Heart right ventricle (tissue), 16 donors: ENCODE measurements at regions of chr7 and their contacts with region 1.

Region 1: DNA sequence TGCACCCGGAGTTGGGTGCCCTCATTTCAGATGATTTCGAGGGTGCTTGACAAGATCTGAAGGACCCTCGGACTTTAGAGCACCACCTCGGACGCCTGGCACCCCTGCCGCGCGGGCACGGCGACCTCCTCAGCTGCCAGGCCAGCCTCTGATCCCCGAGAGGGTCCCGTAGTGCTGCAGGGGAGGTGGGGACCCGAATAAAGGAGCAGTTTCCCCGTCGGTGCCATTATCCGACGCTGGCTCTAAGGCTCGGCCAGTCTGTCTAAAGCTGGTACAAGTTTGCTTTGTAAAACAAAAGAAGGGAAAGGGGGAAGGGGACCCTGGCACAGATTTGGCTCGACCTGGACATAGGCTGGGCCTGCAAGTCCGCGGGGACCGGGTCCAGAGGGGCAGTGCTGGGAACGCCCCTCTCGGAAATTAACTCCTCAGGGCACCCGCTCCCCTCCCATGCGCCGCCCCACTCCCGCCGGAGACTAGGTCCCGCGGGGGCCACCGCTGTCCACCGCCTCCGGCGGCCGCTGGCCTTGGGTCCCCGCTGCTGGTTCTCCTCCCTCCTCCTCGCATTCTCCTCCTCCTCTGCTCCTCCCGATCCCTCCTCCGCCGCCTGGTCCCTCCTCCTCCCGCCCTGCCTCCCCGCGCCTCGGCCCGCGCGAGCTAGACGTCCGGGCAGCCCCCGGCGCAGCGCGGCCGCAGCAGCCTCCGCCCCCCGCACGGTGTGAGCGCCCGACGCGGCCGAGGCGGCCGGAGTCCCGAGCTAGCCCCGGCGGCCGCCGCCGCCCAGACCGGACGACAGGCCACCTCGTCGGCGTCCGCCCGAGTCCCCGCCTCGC is at the start of gene EGFR:
- DNase-seq: peak; percentile 81 to 84
- ATAC-seq: peak; percentile 82 to 92 (median 86)
- H3K4me3 ChIP-seq: peak within 1 kb of the TSS; percentile 64 to 95 (median 76)
- H3K27ac ChIP-seq: peak within 1 kb of the TSS; percentile 83 to 98 (median 94)
- H3K4me1 ChIP-seq: peaks cover 0 to 17% (median 8%) of the 10 kb centered on the region in 9 donors
- H3K27me3 ChIP-seq: peaks cover 0 to 44% (median 24%) of the 10 kb centered on the region in 7 donors
- CTCF ChIP-seq: no peak
- total RNA-seq, gene EGFR: 5.0 to 13.5 (median 9.2) TPM

Region 2: DNA sequence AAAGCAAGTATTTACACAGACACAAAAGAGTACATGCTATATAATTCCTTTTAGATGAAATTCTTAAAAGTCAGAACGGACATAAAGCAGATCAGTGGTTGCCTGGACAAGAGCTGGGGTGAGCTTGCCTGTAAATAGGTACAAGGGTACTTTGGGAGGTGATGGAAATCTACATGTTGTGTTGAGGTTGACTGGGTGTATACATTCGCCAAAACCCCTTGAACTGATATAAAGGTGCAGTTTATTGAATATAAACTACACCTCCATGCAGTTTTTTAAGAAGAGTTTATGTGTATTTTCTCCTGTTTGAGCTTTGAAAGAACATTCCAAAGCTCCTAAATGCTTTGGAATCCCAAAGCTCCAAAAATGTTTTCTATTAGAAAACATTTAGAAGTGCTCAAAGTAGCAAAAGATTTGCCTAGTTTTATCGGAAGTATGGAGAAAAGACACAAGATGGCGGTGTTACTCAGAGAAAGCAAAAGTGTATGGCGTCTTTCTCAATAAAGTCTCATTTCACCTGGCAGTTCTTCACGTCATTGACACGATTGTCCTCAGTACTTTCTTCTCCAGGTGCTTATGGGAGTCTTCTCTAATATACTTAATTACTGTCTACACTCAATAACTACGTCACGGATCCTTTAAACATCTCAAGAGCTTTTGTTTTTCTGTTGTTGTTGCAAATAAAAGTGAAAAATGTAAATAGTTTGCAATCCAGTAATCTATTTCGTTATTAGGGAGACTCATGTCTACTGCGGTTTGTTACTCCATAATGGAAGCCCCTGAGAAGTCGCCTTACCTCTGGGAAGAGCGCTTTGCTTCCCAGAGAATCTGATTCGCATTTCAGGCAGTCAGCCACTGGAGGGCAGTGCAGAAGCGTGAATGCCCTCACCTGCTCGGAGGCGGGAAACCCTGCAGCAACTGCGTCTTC is 244.8 kb before region 1 on chr7:
- intact Hi-C with region 1: loop called in 1 of 10 experiments (anchors 10 kb)
- DNase-seq: peak; percentile 79 to 80
- ATAC-seq: peak; percentile 68 to 96 (median 92)
- H3K4me3 ChIP-seq: peak overlapping the region in 9 of 10 donors; percentile 5 to 52 (median 41)
- H3K27ac ChIP-seq: no peak overlapping the region
- H3K4me1 ChIP-seq: peaks cover 0 to 8% (median 0%) of the 10 kb centered on the region in 9 donors
- H3K27me3 ChIP-seq: peaks cover 0 to 38% (median 21%) of the 10 kb centered on the region in 7 donors
- CTCF ChIP-seq: peak; percentile 73 to 91 (median 83)

Region 3: DNA sequence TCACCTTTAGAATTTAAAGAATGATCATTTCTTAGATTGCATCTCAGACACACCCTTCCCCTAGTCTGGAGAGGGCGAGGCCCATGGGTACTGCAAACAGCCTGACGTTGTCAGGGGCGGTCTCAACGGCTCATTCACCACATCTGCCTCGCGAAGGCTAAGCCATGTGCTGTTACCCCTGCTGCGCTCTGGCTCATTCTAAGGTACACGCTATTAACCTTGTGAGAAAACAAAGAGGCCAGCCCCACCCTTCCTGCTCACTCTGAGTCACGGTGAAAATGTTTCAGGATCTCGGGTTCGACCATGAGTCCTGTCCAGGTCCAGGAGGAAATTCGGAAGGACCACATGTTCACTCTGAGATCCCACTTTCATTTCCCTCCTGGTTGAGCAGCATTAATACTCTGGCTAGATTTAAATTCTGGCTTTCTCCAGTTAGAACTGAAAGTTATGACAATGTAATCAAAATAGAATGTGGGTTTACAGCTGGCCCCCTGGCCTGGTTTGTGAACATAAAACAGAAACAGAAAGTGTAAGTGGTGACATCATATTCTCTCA is 55.4 kb after region 1 on chr7:
- intact Hi-C with region 1: loop called in 3 of 10 experiments (anchors 5 to 10 kb)
- DNase-seq: peak in 1 of 2 donors; percentile 38
- ATAC-seq: peak; percentile 47 to 88 (median 78)
- H3K4me3 ChIP-seq: peak overlapping the region in 7 of 10 donors; percentile 0 to 35 (median 25)
- H3K27ac ChIP-seq: peak overlapping the region; percentile 6 to 77 (median 42)
- H3K4me1 ChIP-seq: peaks cover 9 to 50% (median 32%) of the 10 kb centered on the region in 9 donors
- H3K27me3 ChIP-seq: no peaks in the 10 kb centered on the region
- CTCF ChIP-seq: no peak

Region 4: GRCh38 chr7:55100544-55101301 is 82.1 kb after region 1 on chr7:
- intact Hi-C with region 1: loop called in 1 of 10 experiments (anchors 2 kb)
- DNase-seq: peak; percentile 83 to 92
- ATAC-seq: peak; percentile 84 to 91 (median 88)
- H3K4me3 ChIP-seq: peak overlapping the region in 1 of 10 donors; percentile 2
- H3K27ac ChIP-seq: peak overlapping the region in 9 of 10 donors; percentile 50 to 87 (median 73)
- H3K4me1 ChIP-seq: peaks cover 8 to 70% (median 28%) of the 10 kb centered on the region in 9 donors
- H3K27me3 ChIP-seq: no peaks in the 10 kb centered on the region
- CTCF ChIP-seq: no peak

Region 5: GRCh38 chr7:55173671-55174070 is 155.1 kb after region 1 on chr7:
- intact Hi-C with region 1: no loop called
- DNase-seq: no peak
- ATAC-seq: no peak
- H3K4me3 ChIP-seq: no peak overlapping the region
- H3K27ac ChIP-seq: no peak overlapping the region
- H3K4me1 ChIP-seq: peaks cover 0 to 27% (median 15%) of the 10 kb centered on the region in 9 donors
- H3K27me3 ChIP-seq: no peaks in the 10 kb centered on the region
- CTCF ChIP-seq: no peak

Region 6: DNA sequence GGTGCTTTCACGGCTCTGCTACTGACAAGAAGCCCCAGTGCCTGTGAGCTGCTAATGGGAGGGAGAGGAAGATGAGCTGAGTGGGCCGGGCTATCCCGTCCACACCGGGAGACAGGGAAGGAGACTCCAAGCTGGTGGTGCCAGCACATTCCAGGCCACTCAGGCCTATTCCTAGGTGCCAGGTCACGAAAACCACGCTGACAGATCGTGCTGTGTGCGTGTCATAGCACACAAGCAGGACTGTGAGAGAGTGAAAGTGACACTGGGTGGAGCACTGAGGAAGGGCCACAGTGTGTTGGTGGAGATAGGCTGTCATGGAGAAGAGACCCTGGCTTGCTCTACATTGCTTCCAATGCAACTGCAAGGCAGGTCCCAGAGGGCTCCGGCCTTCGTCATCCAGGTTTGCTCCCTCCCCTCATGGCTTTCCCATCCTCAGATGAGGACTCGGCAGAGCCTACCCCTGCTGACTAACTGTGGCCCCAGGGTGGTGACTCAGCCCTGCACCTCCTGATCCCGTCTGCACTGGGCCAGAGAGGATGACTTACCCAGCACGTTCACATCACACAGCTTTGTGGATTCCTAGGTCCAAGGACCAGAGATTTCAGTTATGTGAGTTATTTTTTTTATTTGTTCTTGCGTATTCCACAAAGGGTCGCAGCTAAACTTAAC is 167.5 kb after region 1 on chr7:
- intact Hi-C with region 1: loop called in 2 of 10 experiments (anchors 5 kb)
- DNase-seq: no peak
- ATAC-seq: peak in 1 of 8 donors; percentile 75
- H3K4me3 ChIP-seq: no peak overlapping the region
- H3K27ac ChIP-seq: peak overlapping the region in 1 of 10 donors; percentile 31
- H3K4me1 ChIP-seq: peaks cover 13 to 39% (median 22%) of the 10 kb centered on the region in 9 donors
- H3K27me3 ChIP-seq: no peaks in the 10 kb centered on the region
- CTCF ChIP-seq: no peak

Region 7: DNA sequence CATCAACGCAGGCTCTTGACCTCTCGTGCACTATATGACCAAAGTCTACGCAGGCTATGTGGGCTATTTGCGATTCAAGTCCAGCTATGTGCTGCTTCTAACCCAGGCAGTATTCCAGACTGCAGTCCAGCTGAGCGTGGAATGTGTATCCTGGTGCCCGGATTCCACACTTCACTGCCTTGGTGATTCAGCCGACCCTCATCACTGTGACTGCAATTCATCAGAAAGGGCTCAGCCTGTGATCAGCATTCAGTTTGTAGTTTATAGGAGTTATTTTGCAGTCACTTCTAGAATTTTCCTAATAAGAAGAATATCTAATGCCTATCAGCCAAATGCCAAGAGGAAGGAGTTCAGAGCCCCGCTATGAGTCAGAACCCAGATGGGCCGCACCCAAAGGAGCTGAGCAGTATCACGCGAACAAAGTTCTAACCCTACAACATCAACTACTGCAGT is 226.7 kb after region 1 on chr7:
- intact Hi-C with region 1: loop called in 7 of 10 experiments (anchors 5 to 10 kb)
- DNase-seq: no peak
- ATAC-seq: peak in 2 of 8 donors; percentile 37 to 51
- H3K4me3 ChIP-seq: no peak overlapping the region
- H3K27ac ChIP-seq: no peak overlapping the region
- H3K4me1 ChIP-seq: no peaks in the 10 kb centered on the region
- H3K27me3 ChIP-seq: peaks cover 0 to 3% (median 0%) of the 10 kb centered on the region in 7 donors
- CTCF ChIP-seq: no peak

Region 8: GRCh38 chr7:55308188-55308929 is 289.8 kb after region 1 on chr7:
- intact Hi-C with region 1: no loop called
- DNase-seq: peak in 1 of 2 donors; percentile 20
- ATAC-seq: peak; percentile 59 to 89 (median 74)
- H3K4me3 ChIP-seq: no peak overlapping the region
- H3K27ac ChIP-seq: peak overlapping the region in 6 of 10 donors; percentile 19 to 74 (median 35)
- H3K4me1 ChIP-seq: peaks cover 0 to 36% (median 16%) of the 10 kb centered on the region in 9 donors
- H3K27me3 ChIP-seq: no peaks in the 10 kb centered on the region
- CTCF ChIP-seq: no peak